Dorsolateral prefrontal cortex (tissue), 120 donors: ENCODE measurements at regions of chr15 and their contacts with region 1.

Region 1: DNA sequence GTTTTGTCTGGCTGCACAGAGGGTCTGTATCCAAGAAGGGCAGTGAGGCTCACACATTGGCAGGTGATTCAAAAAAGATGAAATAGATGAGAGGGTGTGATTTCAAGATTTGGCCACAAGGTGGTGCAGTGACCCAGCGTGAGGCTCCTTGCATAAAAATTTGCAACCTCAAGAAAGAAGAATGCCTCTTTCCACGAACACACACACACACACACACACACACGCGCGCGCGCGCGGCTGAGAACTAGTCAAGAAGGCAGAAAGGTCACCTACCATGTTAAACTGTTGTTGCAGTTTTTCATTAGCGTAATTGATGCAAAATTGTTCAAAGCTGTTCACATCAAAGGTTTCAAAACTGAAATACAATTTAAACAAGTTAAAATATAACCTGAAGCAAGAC is 39.2 kb downstream of the MYO5C start:
- DNase-seq: peak in 7 of 10 donors; percentile 51 to 81 (median 70)
- H3K4me3 ChIP-seq: peak overlapping the region in 24 of 59 donors; percentile 4 to 50 (median 31)
- H3K27ac ChIP-seq: peak overlapping the region in 38 of 59 donors; percentile 6 to 86 (median 51)
- H3K27me3 ChIP-seq: no peaks in the 10 kb centered on the region
- CTCF ChIP-seq: peak; percentile 69 to 94 (median 83)

Region 2: GRCh38 chr15:51706291-51706690 is 550.1 kb before region 1 on chr15:
- intact Hi-C with region 1: no loop called
- DNase-seq: no peak
- H3K4me3 ChIP-seq: no peak overlapping the region
- H3K27ac ChIP-seq: peak overlapping the region in 48 of 59 donors; percentile 1 to 76 (median 54)
- H3K27me3 ChIP-seq: no peaks in the 10 kb centered on the region
- CTCF ChIP-seq: no peak

Region 3: GRCh38 chr15:52050416-52050815 is 205.9 kb before region 1 on chr15:
- intact Hi-C with region 1: no loop called
- DNase-seq: no peak
- H3K4me3 ChIP-seq: no peak overlapping the region
- H3K27ac ChIP-seq: peak overlapping the region in 1 of 59 donors; percentile 54
- H3K27me3 ChIP-seq: no peaks in the 10 kb centered on the region
- CTCF ChIP-seq: no peak

Region 4: GRCh38 chr15:52331490-52332240 is 75.3 kb after region 1 on chr15:
- intact Hi-C with region 1: loop called (anchors 5 kb)
- DNase-seq: peak in 1 of 10 donors; percentile 41
- H3K4me3 ChIP-seq: no peak overlapping the region
- H3K27ac ChIP-seq: peak overlapping the region in 46 of 59 donors; percentile 0 to 71 (median 40)
- H3K27me3 ChIP-seq: no peaks in the 10 kb centered on the region
- CTCF ChIP-seq: peak in 54 of 56 donors; percentile 14 to 80 (median 52)

Region 5: GRCh38 chr15:52362502-52362901 is 106.1 kb after region 1 on chr15:
- intact Hi-C with region 1: loop called in 1 of 2 experiments (anchors 10 kb)
- DNase-seq: no peak
- H3K4me3 ChIP-seq: no peak overlapping the region
- H3K27ac ChIP-seq: peak overlapping the region in 50 of 59 donors; percentile 1 to 82 (median 66)
- H3K27me3 ChIP-seq: no peaks in the 10 kb centered on the region
- CTCF ChIP-seq: no peak

Region 6: DNA sequence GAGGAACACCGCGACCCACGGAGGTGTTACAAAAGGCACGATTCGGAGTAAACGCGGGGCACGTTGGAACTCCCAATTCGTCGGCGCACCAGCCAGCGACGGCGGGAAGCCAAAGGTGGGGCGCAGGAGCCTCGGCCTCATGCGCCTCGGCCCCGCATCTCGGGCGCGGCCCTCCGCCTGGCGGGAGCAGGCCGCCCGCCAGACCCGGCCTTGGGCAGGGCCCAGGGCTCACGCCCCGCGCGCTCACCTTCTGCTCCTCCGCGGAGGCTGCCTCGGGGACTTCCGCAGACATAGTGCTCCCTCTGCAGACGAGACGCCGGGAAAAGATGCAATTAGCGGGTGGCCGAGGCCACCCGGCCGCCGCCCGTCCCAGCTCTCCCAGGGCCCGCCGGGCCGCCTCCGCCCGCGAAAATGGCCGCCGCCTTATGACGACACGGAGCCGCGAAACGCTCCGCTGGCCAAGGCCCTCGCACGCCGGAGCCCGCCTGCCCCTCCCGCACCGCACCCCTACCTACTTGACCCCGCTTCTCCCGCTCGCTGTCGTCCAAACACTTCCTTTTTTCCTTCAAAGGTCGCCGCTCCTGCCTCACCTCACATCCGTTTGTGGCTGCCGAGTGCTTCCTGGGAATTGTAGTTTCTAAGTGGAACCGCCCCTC is 312.4 kb after region 1 on chr15 and contains the start of gene ARPP19:
- intact Hi-C with region 1: loop called (anchors 2 to 10 kb)
- DNase-seq: peak; percentile 69 to 93 (median 92)
- H3K4me3 ChIP-seq: peak within 1 kb of the TSS; percentile 58 to 98 (median 87)
- H3K27ac ChIP-seq: peak within 1 kb of the TSS; percentile 63 to 96 (median 91)
- H3K27me3 ChIP-seq: no peaks in the 10 kb centered on the region
- CTCF ChIP-seq: peak in 48 of 56 donors; percentile 2 to 68 (median 36)
- total RNA-seq, gene ARPP19: 228 to 624 (median 390) TPM

Region 7: GRCh38 chr15:52735231-52736089 is 479.1 kb after region 1 on chr15:
- intact Hi-C with region 1: loop called (anchors 2 to 5 kb)
- DNase-seq: peak in 4 of 10 donors; percentile 36 to 69 (median 42)
- H3K4me3 ChIP-seq: no peak overlapping the region
- H3K27ac ChIP-seq: no peak overlapping the region
- H3K27me3 ChIP-seq: peaks cover 0 to 2% (median 0%) of the 10 kb centered on the region in 45 donors
- CTCF ChIP-seq: peak; percentile 80 to 97 (median 90)

Region 8: GRCh38 chr15:53307952-53308621 is 1051.7 kb after region 1 on chr15:
- intact Hi-C with region 1: no loop called
- DNase-seq: no peak
- H3K4me3 ChIP-seq: no peak overlapping the region
- H3K27ac ChIP-seq: no peak overlapping the region
- H3K27me3 ChIP-seq: peaks cover 0 to 10% (median 0%) of the 10 kb centered on the region in 45 donors
- CTCF ChIP-seq: no peak